ENCODE measurements at regions of chr19 and their contacts with region 1.

Region 1: DNA sequence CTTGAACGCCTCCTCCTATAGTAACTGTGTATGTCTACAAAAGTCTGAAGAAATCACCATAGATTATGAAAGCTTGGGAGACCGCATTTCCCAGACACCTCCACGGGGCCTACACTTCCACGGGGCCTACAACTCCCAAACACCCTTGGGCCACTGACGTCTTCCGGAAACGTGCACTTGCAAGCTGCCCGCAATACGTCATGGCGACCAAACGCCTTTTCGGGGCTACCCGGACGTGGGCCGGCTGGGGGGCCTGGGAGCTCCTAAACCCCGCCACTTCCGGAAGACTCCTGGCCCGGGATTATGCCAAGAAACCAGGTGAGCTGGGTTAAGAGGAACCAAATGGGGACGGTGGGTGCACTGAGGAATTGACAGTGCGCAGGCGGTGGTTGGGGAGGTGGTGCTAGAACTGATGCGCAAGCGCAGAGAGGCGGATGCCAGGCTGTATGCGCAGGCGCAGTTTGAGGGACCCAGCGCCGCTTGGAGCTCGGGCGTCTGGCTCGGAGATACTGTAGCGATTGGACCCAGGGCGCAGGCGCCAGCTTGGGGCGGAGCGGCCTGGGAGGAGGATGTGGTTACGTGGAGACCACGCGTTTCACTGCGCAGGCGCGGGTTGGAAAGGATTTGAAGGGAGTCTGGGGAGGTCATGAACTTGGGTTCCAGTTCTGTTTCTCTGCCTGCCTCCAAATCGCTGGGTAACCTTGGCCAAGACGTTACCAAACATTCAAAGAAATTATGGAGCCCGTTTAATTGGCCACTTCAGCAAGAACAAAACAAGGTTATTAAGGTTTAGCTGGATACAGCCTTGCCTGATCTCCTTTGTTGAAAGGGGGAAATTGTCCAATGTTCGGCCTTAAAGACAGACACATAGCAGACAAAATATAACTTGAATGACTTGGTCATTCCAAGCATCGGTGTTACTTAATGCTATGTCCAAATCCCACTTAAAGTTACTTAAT is at the start of gene MRPL54:
- DNase-seq: peak; percentile 98 to 100 (median 100)
- H3K4me3 ChIP-seq: peak within 1 kb of the TSS; percentile 98
- H3K4me3 Mint-ChIP-seq: peak within 1 kb of the TSS; percentile 96 to 99 (median 98)
- H3K27ac ChIP-seq: peak within 1 kb of the TSS; percentile 100
- H3K27ac Mint-ChIP-seq: peak within 1 kb of the TSS; percentile 100
- H3K4me1 ChIP-seq: peaks cover 45% of the 10 kb centered on the region
- H3K4me1 Mint-ChIP-seq: peaks cover 38 to 62% (median 42%) of the 10 kb centered on the region in 3 donors
- H3K27me3 ChIP-seq: no peaks in the 10 kb centered on the region
- H3K27me3 Mint-ChIP-seq: peaks cover 0 to 7% of the 10 kb centered on the region in 2 donors
- total RNA-seq, gene MRPL54: 85.0 to 95.3 TPM

Region 2: GRCh38 chr19:3733549-3734309 is 29.1 kb before region 1 on chr19:
- CTCF ChIA-PET with region 1: no interaction called
- POLR2A ChIA-PET with region 1: no interaction called
- DNase-seq: no peak
- H3K4me3 ChIP-seq: no peak overlapping the region
- H3K4me3 Mint-ChIP-seq: no peak overlapping the region
- H3K27ac ChIP-seq: no peak overlapping the region
- H3K27ac Mint-ChIP-seq: no peak overlapping the region
- H3K4me1 ChIP-seq: peaks cover 2% of the 10 kb centered on the region
- H3K4me1 Mint-ChIP-seq: peaks cover 0 to 13% (median 4%) of the 10 kb centered on the region in 3 donors
- H3K27me3 ChIP-seq: no peaks in the 10 kb centered on the region
- H3K27me3 Mint-ChIP-seq: no peaks in the 10 kb centered on the region

Region 3: GRCh38 chr19:3783660-3784584 is 21.1 kb after region 1 on chr19:
- CTCF ChIA-PET with region 1: interaction called, 13 read pairs
- POLR2A ChIA-PET with region 1: interaction called, 6 read pairs
- DNase-seq: peak in 4 of 5 donors; percentile 38 to 68 (median 55)
- H3K4me3 ChIP-seq: no peak overlapping the region
- H3K4me3 Mint-ChIP-seq: peak overlapping the region; percentile 83 to 95 (median 90)
- H3K27ac ChIP-seq: no peak overlapping the region
- H3K27ac Mint-ChIP-seq: peak overlapping the region; percentile 67 to 96 (median 89)
- H3K4me1 ChIP-seq: peaks cover 14% of the 10 kb centered on the region
- H3K4me1 Mint-ChIP-seq: peaks cover 27 to 40% (median 36%) of the 10 kb centered on the region in 3 donors
- H3K27me3 ChIP-seq: no peaks in the 10 kb centered on the region
- H3K27me3 Mint-ChIP-seq: peaks cover 0 to 1% of the 10 kb centered on the region in 2 donors

Region 4: GRCh38 chr19:3810708-3811355 is 48.1 kb after region 1 on chr19:
- CTCF ChIA-PET with region 1: interaction called, 13 read pairs
- POLR2A ChIA-PET with region 1: interaction called, 29 read pairs
- DNase-seq: no peak
- H3K4me3 ChIP-seq: no peak overlapping the region
- H3K4me3 Mint-ChIP-seq: peak overlapping the region in 1 of 7 donors; percentile 51
- H3K27ac ChIP-seq: no peak overlapping the region
- H3K27ac Mint-ChIP-seq: peak overlapping the region in 2 of 8 donors; percentile 43 to 70
- H3K4me1 ChIP-seq: peaks cover 39% of the 10 kb centered on the region
- H3K4me1 Mint-ChIP-seq: peaks cover 43 to 67% (median 50%) of the 10 kb centered on the region in 3 donors
- H3K27me3 ChIP-seq: no peaks in the 10 kb centered on the region
- H3K27me3 Mint-ChIP-seq: no peaks in the 10 kb centered on the region